ENCODE measurements at regions of chr14 and their contacts with region 1.

Region 1: DNA sequence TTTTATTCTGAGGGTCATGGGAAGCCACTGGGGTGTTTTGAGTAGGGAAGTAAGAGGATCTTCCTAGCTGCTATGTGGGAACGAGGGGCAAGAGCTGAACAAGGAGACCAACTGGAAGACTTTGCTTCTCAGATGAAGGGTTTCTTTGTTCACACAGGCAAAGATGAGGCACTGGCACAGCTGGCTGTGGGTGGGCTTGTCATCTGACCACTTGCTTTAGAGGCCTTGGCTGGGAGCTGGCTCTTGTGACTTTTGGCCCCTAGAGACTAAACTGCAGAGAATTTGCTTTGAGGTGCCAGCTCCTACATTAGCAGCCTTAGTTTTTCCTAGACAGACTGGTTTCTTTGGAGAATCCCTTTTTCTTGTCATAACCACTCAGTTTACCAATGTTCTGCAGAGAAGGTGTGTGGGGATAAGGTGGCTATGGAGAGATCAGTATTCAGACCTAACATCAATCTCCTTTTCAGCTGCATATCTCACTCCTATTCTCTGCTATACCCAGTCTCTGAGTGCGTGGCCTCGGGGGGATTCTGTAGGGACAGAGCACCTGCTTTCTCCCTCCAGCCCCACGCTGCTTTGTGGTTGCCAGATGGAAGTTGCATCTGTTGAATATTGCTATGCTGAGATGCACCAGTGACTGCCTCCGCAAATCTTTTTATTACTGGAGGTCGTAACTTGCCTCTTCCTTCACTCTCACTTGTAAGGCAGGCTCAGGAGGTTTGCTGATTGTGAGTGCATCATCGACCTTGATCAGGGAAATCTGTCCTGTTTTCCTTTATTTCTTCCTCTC is 12.7 kb downstream of the PPP2R5C start:
- DNase-seq: no peak
- ATAC-seq: no peak
- H3K4me3 Mint-ChIP-seq: no peak overlapping the region
- H3K27ac Mint-ChIP-seq: no peak overlapping the region
- H3K4me1 Mint-ChIP-seq: no peaks in the 10 kb centered on the region
- H3K27me3 Mint-ChIP-seq: peaks cover 16% of the 10 kb centered on the region
- CTCF ChIP-seq: no peak

Region 2: DNA sequence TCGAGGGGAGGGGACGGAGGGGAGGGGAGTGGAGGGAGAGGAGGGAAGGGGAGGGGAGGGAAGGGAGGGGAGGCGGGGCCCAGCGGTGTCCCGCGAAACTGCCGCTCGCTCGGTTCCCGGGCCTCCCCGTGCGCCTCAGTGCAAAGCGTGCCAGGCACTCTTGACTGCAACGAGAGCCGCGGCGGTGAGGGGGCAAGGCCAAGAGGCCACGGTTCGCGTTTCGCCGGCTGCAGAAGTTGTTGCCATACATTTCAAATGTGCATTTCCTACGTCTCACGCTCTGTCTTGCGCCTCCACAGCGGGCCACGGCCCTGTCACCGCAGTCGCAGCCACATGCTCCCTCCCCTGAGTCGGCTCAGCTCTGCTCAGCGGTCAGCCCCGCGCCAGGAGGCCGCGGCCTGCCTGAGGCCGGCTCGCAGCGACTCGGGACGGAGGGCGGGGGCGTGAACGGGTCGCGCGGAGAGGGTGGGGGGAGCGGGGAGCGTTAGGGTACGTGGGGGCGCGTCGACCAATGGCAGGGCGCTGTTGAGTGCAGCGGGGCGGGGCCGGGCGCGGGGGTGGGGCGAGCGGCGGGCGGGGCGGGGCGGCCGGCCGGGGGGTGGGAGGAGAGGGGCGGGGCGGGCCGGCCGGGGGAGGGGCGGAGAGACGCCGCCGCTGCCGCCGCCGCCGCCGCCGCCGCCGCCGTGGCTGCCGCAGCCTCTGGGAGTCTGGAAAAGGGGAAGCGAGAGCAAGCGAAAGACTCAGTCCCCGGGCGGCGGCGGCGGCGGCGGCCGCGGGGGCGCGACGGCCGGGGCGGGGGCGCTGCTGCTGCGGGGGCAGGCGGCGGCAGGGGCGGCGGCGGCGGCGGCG is 12.9 kb before region 1 on chr14 and contains the start of gene PPP2R5C:
- CTCF ChIA-PET with region 1: interaction called, 21 read pairs
- POLR2A ChIA-PET with region 1: interaction called, 5 read pairs
- DNase-seq: peak; percentile 83
- ATAC-seq: peak; percentile 58
- H3K4me3 Mint-ChIP-seq: peak within 1 kb of the TSS; percentile 84
- H3K27ac Mint-ChIP-seq: no peak within 1 kb of the TSS
- H3K4me1 Mint-ChIP-seq: peaks cover 11% of the 10 kb centered on the region
- H3K27me3 Mint-ChIP-seq: peaks cover 63% of the 10 kb centered on the region
- CTCF ChIP-seq: no peak
- total RNA-seq, gene PPP2R5C: 89.9 to 105 TPM (median 99.9 TPM) in 3 replicates

Region 3: GRCh38 chr14:101843665-101844064 is 69.5 kb after region 1 on chr14:
- CTCF ChIA-PET with region 1: interaction called, 14 read pairs
- POLR2A ChIA-PET with region 1: no interaction called
- DNase-seq: no peak
- ATAC-seq: peak; percentile 58
- H3K4me3 Mint-ChIP-seq: no peak overlapping the region
- H3K27ac Mint-ChIP-seq: 0 out of 2 replicates have a peak overlapping the region, but pooled peaks have one; percentile 10
- H3K4me1 Mint-ChIP-seq: peaks cover 33% of the 10 kb centered on the region
- H3K27me3 Mint-ChIP-seq: no peaks in the 10 kb centered on the region
- CTCF ChIP-seq: no peak

Region 4: DNA sequence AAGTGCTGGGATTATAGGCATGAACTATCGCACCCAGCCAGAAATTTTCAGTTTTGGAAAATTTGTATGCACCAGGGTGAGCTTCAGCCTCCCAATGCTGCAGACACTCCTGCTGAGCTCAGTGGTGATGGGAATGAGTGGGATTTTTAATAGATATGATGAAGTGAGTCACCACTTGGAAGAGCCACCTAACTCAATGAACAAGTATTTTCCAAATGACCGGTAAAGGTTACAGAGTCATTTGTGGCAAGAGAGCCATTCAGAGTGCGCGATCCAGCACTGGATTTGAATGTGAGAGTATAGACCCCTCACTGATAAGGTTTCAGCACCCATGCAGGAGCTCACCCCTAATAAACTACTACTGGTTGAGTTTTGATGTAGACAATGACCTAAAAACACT is 88.0 kb after region 1 on chr14:
- CTCF ChIA-PET with region 1: no interaction called
- POLR2A ChIA-PET with region 1: no interaction called
- DNase-seq: no peak
- ATAC-seq: no peak
- H3K4me3 Mint-ChIP-seq: no peak overlapping the region
- H3K27ac Mint-ChIP-seq: no peak overlapping the region
- H3K4me1 Mint-ChIP-seq: no peaks in the 10 kb centered on the region
- H3K27me3 Mint-ChIP-seq: no peaks in the 10 kb centered on the region
- CTCF ChIP-seq: no peak

Region 5: DNA sequence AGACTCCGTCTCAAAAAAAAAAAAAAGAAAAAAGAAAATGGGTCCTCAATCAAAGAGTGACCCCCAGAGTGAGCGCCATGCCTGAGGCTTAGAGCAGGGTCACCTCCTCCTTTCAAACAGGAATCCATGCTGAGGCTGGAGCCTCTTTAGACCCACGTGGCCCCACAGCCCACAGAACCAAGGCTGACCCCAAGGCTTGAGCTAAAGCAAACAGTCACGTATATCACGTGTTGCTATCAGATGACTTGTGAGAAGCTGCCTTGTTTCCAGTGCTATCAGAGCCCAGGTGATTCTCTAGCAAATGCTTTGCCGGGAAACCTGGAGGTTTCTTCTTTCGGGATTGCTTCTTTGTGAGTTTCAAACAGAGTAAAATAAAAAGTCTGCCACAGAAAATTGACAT is 158.5 kb after region 1 on chr14:
- CTCF ChIA-PET with region 1: interaction called, 13 read pairs
- POLR2A ChIA-PET with region 1: no interaction called
- DNase-seq: no peak
- ATAC-seq: no peak
- H3K4me3 Mint-ChIP-seq: no peak overlapping the region
- H3K27ac Mint-ChIP-seq: no peak overlapping the region
- H3K4me1 Mint-ChIP-seq: no peaks in the 10 kb centered on the region
- H3K27me3 Mint-ChIP-seq: peaks cover 29% of the 10 kb centered on the region
- CTCF ChIP-seq: no peak

Region 6: DNA sequence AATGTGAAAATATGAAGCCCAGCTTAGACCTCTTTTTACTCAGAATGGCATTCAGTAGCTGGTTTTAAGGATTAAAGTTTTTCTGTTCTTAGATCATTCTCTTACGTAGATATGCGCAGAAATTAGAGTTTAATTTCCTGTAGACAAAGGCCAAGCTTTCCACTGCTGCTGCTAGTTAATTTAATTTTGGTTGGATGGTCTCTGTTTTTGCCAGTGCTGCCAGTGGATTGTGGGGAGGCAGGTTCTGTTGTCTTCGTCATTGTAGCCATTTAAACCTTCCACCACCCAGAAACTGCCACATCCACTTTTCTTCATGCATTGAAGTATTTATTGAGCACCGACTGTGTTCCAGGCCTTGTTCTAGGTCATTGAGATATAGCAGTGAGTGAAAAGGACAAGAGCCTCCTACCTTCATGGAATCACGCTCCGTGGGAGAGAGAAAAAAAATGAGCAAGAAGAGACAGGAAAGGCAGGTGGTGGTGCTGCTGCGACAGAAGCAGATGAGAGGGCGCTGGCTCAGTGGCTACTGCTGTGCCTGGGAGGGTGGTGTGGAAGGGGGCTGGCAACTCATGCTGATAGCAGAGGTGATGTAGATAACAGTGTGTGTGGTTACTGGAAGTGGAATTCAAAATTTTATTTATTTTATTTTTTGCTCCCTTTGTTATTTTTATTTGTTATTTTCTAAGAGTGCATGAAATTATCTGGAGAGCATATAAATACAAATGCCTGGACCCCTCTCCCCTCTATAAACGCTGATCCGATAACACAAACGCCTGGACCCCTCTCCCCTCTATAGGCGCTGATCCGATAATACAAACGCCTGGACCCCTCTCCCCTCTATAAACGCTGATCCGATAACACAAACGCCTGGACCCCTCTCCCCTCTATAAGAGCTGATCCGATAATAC is 223.5 kb after region 1 on chr14:
- CTCF ChIA-PET with region 1: no interaction called
- POLR2A ChIA-PET with region 1: no interaction called
- DNase-seq: no peak
- ATAC-seq: no peak
- H3K4me3 Mint-ChIP-seq: no peak overlapping the region
- H3K27ac Mint-ChIP-seq: no peak overlapping the region
- H3K4me1 Mint-ChIP-seq: no peaks in the 10 kb centered on the region
- H3K27me3 Mint-ChIP-seq: no peaks in the 10 kb centered on the region
- CTCF ChIP-seq: no peak

Measured in WTC11 (cell line).